ENCODE measurements at regions of chr1 and their contacts with region 1.

Region 1: DNA sequence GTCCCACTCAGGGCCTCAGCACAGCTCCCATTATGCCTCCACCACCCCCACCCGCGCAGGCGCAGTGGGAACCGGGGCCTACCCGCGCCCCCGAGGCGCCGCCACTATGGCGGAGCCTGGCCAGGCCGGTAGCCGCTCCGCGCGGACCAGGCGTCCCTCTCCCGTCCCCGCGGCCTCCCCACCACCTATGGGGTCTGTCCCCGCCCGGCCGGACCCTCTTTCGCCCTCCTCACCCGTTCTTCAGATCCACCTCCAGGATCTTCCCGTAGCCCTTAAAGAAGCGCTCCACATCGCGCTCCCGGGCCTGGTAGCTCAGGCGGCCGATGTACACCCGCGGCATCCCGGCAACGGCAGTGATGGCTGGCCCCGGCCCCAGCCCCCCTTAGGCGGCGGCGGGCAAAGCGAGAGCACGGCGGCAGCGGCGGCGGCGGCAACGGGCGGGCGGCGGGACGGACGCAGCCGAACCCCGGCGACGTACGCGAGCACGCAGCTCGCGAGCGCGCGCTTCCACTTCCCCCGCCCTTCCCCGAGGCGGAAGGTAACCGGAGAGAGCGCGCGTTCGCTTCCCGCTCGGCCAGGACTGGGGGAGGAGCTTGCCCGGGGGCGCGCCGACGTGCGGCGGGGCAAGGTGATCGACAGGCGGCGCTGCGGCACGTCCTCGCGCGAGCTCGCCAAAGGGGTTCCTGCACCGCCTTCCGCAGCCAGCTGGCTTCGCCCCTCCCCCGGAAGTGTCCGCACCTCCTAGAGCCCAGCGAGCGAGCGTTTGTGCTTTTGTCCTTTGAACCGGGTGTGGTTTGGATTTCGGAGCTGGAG is at the start of gene SRSF4:
- DNase-seq: peak; percentile 99 to 100
- H3K4me3 ChIP-seq: peak within 1 kb of the TSS; percentile 71 to 96 (median 88)
- H3K27ac ChIP-seq: peak within 1 kb of the TSS; percentile 99 to 100 (median 100)
- H3K4me1 ChIP-seq: peaks cover 34 to 54% (median 44%) of the 10 kb centered on the region in 4 donors
- H3K27me3 ChIP-seq: no peaks in the 10 kb centered on the region
- CTCF ChIP-seq: peak in 5 of 7 experiments; percentile 69 to 89 (median 75)
- EP300 ChIP-seq: no peak
- POLR2A ChIP-seq: peak in 1 of 4 donors; percentile 60
- total RNA-seq, gene SRSF4: 25.1 to 328 (median 65.8) TPM

Region 2: GRCh38 chr1:29124366-29125236 is 57.0 kb before region 1 on chr1:
- intact Hi-C with region 1: loop called (anchors 10 kb)
- DNase-seq: peak; percentile 63 to 96
- H3K4me3 ChIP-seq: peak overlapping the region; percentile 63 to 74 (median 68)
- H3K27ac ChIP-seq: peak overlapping the region; percentile 81 to 93 (median 88)
- H3K4me1 ChIP-seq: peaks cover 36 to 60% (median 47%) of the 10 kb centered on the region in 4 donors
- H3K27me3 ChIP-seq: peaks cover 0 to 62% (median 51%) of the 10 kb centered on the region in 3 donors
- CTCF ChIP-seq: peak in 5 of 7 experiments; percentile 66 to 88 (median 71)
- EP300 ChIP-seq: no peak
- POLR2A ChIP-seq: no peak

Measured in stomach (tissue), 19 donors.